ENCODE measurements at regions of chr20 and their contacts with region 1.

Region 1: GRCh38 chr20:44678242-44678641 is 26.7 kb upstream of the ADA start:
- DNase-seq: no peak
- ATAC-seq: no peak
- H3K4me3 ChIP-seq: no peak overlapping the region
- H3K4me3 Mint-ChIP-seq: no peak overlapping the region
- H3K27ac ChIP-seq: no peak overlapping the region
- H3K27ac Mint-ChIP-seq: no peak overlapping the region
- H3K4me1 ChIP-seq: peaks cover 2% of the 10 kb centered on the region
- H3K4me1 Mint-ChIP-seq: no peaks in the 10 kb centered on the region
- H3K27me3 ChIP-seq: no peaks in the 10 kb centered on the region
- H3K27me3 Mint-ChIP-seq: no peaks in the 10 kb centered on the region
- CTCF ChIP-seq: no peak

Region 2: GRCh38 chr20:44706301-44707017 is 28.2 kb after region 1 on chr20:
- CTCF ChIA-PET with region 1: no interaction called
- POLR2A ChIA-PET with region 1: no interaction called
- intact Hi-C with region 1: no loop called
- DNase-seq: no peak
- ATAC-seq: no peak
- H3K4me3 ChIP-seq: no peak overlapping the region
- H3K4me3 Mint-ChIP-seq: no peak overlapping the region
- H3K27ac ChIP-seq: no peak overlapping the region
- H3K27ac Mint-ChIP-seq: no peak overlapping the region
- H3K4me1 ChIP-seq: no peaks in the 10 kb centered on the region
- H3K4me1 Mint-ChIP-seq: no peaks in the 10 kb centered on the region
- H3K27me3 ChIP-seq: peaks cover 0 to 4% of the 10 kb centered on the region in 2 experiments
- H3K27me3 Mint-ChIP-seq: peaks cover 2% of the 10 kb centered on the region
- CTCF ChIP-seq: no peak

Region 3: GRCh38 chr20:45765980-45766379 is 1087.7 kb after region 1 on chr20:
- CTCF ChIA-PET with region 1: no interaction called
- POLR2A ChIA-PET with region 1: no interaction called
- intact Hi-C with region 1: loop called in 1 of 2 experiments (anchors 5 kb)
- DNase-seq: no peak
- ATAC-seq: no peak
- H3K4me3 ChIP-seq: no peak overlapping the region
- H3K4me3 Mint-ChIP-seq: no peak overlapping the region
- H3K27ac ChIP-seq: no peak overlapping the region
- H3K27ac Mint-ChIP-seq: no peak overlapping the region
- H3K4me1 ChIP-seq: peaks cover 3% of the 10 kb centered on the region
- H3K4me1 Mint-ChIP-seq: peaks cover 5% of the 10 kb centered on the region
- H3K27me3 ChIP-seq: no peaks in the 10 kb centered on the region
- H3K27me3 Mint-ChIP-seq: peaks cover 3% of the 10 kb centered on the region
- CTCF ChIP-seq: no peak